ENCODE measurements at regions of chr4 and their contacts with region 1.

Region 1: DNA sequence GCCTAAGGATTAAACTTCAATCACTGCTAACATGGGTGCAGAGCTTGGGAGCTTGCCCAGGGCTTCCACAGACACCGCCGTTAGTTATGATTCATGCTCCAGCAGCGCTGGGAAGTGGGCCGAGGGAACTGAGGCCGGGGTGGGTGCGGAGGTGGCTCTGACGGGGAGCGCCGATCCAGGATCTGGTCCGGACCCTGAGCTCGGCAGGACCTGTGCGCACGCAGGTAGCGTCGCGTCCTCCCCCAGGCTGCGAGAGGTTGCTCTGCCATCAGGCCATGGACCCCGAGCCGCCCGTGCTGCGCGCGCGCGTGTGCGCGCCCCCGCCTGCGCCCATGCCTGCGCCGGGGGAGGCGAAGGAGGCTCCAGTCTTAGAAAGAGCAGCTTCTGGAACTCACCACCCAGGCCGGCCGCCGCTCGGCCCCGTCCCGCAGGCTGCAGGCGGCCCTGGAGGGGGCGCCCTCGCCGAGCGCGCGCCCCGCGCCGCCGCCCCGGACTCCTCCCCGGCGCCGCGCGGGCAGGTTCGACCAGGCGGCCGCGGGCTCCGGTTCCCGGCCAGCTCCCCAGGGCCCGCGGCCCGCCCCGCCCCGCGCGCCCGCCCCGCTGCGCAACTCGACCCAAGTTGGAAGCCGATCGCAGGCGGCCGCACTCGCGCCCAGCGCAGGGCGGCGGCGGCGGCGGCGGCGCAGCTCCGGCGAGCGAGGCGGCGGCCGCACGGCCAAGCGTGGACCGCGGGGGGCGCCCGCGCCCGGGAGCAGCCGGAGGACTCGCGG is 729 bp upstream of the ADRA2C start:
- DNase-seq: peak; percentile 35
- ATAC-seq: peak; percentile 78
- H3K4me3 Mint-ChIP-seq: no peak overlapping the region
- H3K27ac Mint-ChIP-seq: no peak overlapping the region
- H3K4me1 Mint-ChIP-seq: peaks cover 8% of the 10 kb centered on the region
- H3K27me3 Mint-ChIP-seq: peaks cover 25% of the 10 kb centered on the region

Region 2: DNA sequence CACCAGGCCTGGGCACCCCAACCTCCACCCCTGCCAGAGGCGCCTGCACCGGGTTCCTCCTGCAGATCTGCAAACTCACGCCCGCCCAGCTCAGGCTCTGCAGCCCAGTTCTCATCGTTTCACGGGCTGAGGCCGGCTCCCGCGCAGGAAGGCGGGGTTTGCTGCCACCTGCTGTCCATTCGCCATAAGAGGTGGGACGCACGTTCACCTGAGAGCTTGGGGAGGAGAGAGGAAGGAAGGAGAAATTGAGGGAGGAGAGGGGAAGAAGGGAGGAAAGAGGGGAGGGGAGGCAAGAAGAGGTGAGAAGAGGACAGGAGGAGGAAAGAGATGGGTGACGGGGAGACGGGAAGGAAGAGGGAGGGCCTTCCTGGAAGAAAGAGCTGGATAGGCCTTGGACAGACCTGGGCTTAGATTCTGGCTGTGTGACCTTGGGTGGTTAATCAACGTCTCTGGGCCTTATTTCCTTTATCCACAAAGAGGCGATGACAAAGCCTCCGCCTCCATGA is 115.2 kb after region 1 on chr4:
- CTCF ChIA-PET with region 1: interaction called, 4 read pairs
- POLR2A ChIA-PET with region 1: no interaction called
- intact Hi-C with region 1: loop called (anchors 1 to 5 kb)
- DNase-seq: peak; percentile 87
- ATAC-seq: peak; percentile 85
- H3K4me3 Mint-ChIP-seq: no peak overlapping the region
- H3K27ac Mint-ChIP-seq: no peak overlapping the region
- H3K4me1 Mint-ChIP-seq: peaks cover 11% of the 10 kb centered on the region
- H3K27me3 Mint-ChIP-seq: peaks cover 29% of the 10 kb centered on the region

Region 3: GRCh38 chr4:4859390-4859842 is 1094.0 kb after region 1 on chr4 and contains the start of gene MSX1:
- CTCF ChIA-PET with region 1: no interaction called
- POLR2A ChIA-PET with region 1: no interaction called
- intact Hi-C with region 1: loop called in 1 of 2 experiments (anchors 5 kb)
- DNase-seq: peak; percentile 76
- ATAC-seq: peak; percentile 86
- H3K4me3 Mint-ChIP-seq: peak within 1 kb of the TSS; percentile 38
- H3K27ac Mint-ChIP-seq: no peak within 1 kb of the TSS
- H3K4me1 Mint-ChIP-seq: peaks cover 40% of the 10 kb centered on the region
- H3K27me3 Mint-ChIP-seq: peaks cover 64% of the 10 kb centered on the region
- total RNA-seq, gene MSX1: 0.09 TPM in 1 of 2 experiments, not detected in the other

Measured in activated CD4-positive, alpha-beta T cell treated with anti-CD3 and anti-CD28 coated beads for 36 hours (primary cell).